ENCODE measurements at regions of chr6 and their contacts with region 1.

Region 1: GRCh38 chr6:47413752-47414422 is 63.7 kb upstream of the CD2AP start:
- DNase-seq: peak; percentile 55
- H3K4me3 Mint-ChIP-seq: peak overlapping the region; percentile 63
- H3K27ac Mint-ChIP-seq: peak overlapping the region; percentile 46
- H3K4me1 Mint-ChIP-seq: peaks cover 15% of the 10 kb centered on the region
- H3K27me3 Mint-ChIP-seq: no peaks in the 10 kb centered on the region

Region 2: DNA sequence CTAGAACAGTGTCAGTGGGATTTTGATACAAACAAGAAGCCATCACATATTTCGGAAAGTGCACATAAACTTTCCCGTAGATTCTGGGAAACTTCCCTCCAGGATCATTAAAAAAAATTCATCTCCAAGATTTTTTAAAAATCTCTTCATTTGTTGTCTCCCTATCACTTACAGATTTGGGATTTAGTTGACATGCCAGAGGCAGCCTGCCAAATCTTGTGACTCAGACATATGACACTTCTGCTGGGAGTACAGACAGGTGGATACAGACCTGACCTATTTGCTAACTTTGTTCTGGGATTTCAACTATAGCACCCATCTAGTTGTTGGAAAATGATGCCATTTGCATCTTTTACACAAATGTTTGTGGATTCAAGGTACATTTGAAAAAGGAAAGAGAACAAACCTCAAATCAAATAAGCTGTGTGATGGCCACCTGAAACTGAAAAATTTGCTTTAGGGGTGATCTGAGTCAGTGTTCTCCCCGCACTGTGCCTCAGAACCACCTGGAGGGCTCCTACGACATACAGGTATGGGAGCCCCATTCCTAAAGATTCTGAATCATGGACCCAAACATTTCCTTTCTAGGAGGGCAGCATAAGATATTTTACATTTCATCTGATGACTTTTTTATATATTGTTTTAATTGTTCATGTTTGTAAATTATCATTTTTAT is 41.8 kb after region 1 on chr6:
- CTCF ChIA-PET with region 1: no interaction called
- intact Hi-C with region 1: no loop called
- DNase-seq: no peak
- H3K4me3 Mint-ChIP-seq: no peak overlapping the region
- H3K27ac Mint-ChIP-seq: no peak overlapping the region
- H3K4me1 Mint-ChIP-seq: no peaks in the 10 kb centered on the region
- H3K27me3 Mint-ChIP-seq: no peaks in the 10 kb centered on the region

Region 3: DNA sequence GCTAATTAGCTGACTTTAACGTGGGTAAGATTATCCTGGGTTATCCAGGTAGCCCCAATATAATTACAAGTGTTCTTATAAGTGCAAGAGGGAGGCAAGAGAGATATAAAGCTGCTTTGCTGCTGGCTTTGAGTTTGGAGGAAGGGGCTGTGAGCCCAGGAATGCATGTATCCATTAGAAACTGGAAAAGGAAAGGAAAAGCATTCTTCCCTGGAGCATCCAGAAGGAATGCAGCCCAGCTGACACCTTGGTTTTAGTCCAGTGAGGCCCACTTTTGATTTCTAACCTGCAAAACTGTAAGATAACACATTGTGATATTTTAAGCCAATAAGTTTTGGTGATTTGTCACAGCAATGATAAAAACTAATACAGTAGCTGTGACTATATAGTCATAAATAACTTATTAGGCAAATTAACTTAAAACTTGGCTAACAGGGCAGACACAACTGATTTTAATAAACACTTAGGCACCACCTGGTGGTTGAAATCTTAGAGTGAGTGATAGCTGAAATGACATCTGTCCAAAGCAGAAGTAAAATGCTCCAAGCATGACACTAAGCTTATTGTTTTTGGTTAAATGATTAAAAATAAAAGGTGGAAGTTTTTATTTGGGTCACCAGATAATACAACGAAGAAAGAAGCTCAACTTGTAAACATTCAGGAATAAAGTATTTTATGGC is 320.1 kb after region 1 on chr6:
- CTCF ChIA-PET with region 1: interaction called, 9 read pairs
- intact Hi-C with region 1: loop called (anchors 1 kb)
- DNase-seq: peak; percentile 23
- H3K4me3 Mint-ChIP-seq: no peak overlapping the region
- H3K27ac Mint-ChIP-seq: no peak overlapping the region
- H3K4me1 Mint-ChIP-seq: peaks cover 18% of the 10 kb centered on the region
- H3K27me3 Mint-ChIP-seq: peaks cover 11% of the 10 kb centered on the region

Measured in activated naive CD4-positive, alpha-beta T cell treated with anti-CD3 and anti-CD28 coated beads for 36 hours (primary cell).